ENCODE measurements at regions of chr19 and their contacts with region 1.

Region 1: GRCh38 chr19:33320636-33321035 is 18.3 kb upstream of the CEBPA start:
- DNase-seq: no peak
- ATAC-seq: no peak
- H3K4me3 ChIP-seq: no peak overlapping the region
- H3K27ac ChIP-seq: no peak overlapping the region
- H3K4me1 ChIP-seq: no peaks in the 10 kb centered on the region
- H3K27me3 ChIP-seq: no peaks in the 10 kb centered on the region

Region 2: DNA sequence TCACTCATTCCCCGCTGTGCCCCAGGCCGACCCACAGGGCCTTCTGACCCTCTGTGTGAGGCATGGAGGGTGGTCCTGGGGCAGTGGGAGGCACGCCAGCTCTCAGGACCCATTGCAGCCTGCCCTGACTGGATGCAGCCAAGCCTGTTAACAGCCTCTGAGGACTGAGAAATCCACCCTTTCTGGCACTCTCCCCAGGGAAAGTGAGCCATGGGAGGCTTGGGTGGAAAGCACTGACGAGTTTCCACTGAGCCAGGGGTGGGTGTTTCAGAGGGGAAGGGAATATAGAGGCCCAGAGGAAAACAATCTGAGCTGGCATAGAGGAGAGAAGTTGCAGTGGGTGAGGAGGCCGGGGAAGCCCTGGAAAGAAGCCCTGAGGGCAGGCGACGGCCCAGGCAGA is 64.4 kb before region 1 on chr19:
- intact Hi-C with region 1: loop called in 1 of 2 experiments (anchors 2 kb)
- DNase-seq: no peak
- ATAC-seq: no peak
- H3K4me3 ChIP-seq: no peak overlapping the region
- H3K27ac ChIP-seq: no peak overlapping the region
- H3K4me1 ChIP-seq: no peaks in the 10 kb centered on the region
- H3K27me3 ChIP-seq: no peaks in the 10 kb centered on the region

Measured in aorta (tissue), 5 donors.